ENCODE measurements at regions of chr1 and their contacts with region 1.

Region 1: DNA sequence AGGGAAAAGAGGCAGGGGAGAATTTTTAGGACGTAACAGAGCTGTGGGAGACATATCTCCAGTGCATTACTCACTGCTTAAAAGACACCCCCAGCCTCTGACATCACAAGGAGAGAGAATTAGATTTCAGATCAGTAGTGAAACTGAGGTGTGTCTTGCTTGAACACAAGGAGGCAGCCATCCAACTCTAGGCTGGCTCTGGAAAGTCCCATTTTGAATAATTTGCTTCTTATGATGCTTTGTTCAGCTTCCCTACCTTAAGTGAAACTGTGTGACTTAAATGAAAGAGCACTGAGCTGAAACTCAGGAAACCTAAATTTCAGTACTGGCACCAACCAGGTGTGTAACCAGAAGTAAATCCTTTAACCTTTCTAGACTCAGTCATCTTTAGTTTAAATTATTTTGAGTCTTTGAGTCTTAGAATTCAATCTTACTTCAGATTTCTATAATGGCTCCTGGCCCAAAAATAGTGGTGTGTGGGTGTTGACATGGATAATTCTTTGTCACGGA is 251.6 kb upstream of the SGIP1 start:
- DNase-seq: peak; percentile 94
- ATAC-seq: peak; percentile 91
- H3K4me3 ChIP-seq: peak overlapping the region in 2 of 5 experiments; percentile 10 to 39
- H3K4me3 Mint-ChIP-seq: peak overlapping the region; percentile 80
- H3K27ac ChIP-seq: peak overlapping the region; percentile 86 to 88
- H3K27ac Mint-ChIP-seq: peak overlapping the region; percentile 92
- H3K4me1 ChIP-seq: peaks cover 62 to 67% of the 10 kb centered on the region in 2 donors
- H3K4me1 Mint-ChIP-seq: peaks cover 79% of the 10 kb centered on the region
- H3K27me3 ChIP-seq: no peaks in the 10 kb centered on the region
- H3K27me3 Mint-ChIP-seq: no peaks in the 10 kb centered on the region
- CTCF ChIP-seq: peak; percentile 44

Region 2: DNA sequence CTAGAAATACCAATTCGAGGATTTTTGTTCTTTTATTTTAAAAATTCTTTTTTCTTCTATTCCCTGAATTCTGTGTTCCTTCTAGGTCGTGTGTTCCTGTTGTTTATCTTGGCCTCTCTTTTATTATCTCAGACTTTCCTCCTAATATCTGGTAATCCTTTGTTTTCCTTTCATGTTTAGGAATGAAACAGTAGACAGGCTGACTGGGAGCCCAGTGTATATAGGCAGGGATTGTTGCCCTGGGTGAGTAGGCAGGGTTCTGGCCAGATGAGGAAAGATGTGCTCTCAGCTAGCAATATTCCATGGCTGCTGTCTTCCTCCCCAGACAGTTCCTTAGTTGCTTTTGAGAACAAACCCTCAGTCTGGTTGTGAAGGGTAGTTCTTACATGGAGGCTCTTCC is 651.5 kb before region 1 on chr1:
- CTCF ChIA-PET with region 1: no interaction called
- POLR2A ChIA-PET with region 1: no interaction called
- intact Hi-C with region 1: no loop called
- DNase-seq: no peak
- ATAC-seq: no peak
- H3K4me3 ChIP-seq: no peak overlapping the region
- H3K4me3 Mint-ChIP-seq: no peak overlapping the region
- H3K27ac ChIP-seq: no peak overlapping the region
- H3K27ac Mint-ChIP-seq: no peak overlapping the region
- H3K4me1 ChIP-seq: no peaks in the 10 kb centered on the region
- H3K4me1 Mint-ChIP-seq: no peaks in the 10 kb centered on the region
- H3K27me3 ChIP-seq: no peaks in the 10 kb centered on the region
- H3K27me3 Mint-ChIP-seq: peaks cover 9% of the 10 kb centered on the region
- CTCF ChIP-seq: no peak

Region 3: DNA sequence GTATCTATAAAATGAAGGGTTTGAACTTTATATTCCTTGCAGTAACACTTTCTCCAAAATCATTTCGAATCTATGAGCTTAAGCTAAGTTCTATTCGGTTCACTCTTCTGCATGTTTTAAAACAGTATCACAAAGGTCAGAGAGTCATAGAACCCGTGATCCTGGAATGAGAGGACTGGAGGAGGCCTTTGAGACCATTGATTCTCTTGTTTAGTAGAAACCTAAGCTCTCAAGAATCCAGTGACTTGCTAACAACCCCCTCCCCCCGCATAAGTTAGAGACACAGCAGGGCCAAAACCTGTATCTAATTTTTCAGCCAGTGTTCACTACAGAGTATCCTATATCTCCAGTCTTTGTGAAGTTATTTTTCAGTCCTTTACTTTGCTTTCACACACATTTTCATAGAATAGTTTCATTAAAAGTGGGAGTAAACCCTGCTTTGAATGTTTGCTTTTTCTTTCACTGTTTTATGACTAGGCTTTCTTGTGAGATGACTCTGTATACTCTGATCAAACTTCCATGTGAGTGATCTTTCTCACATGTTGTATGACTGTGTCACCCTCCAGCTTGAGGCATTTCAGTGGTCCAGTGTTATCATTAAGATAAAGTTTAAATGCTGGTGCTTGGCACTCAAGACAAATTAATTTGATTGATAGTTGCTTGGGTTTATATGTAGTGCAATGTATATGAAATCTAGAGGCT is 23.8 kb before region 1 on chr1:
- CTCF ChIA-PET with region 1: interaction called, 11 read pairs
- POLR2A ChIA-PET with region 1: no interaction called
- intact Hi-C with region 1: loop called (anchors 1 kb)
- DNase-seq: no peak
- ATAC-seq: no peak
- H3K4me3 ChIP-seq: no peak overlapping the region
- H3K4me3 Mint-ChIP-seq: no peak overlapping the region
- H3K27ac ChIP-seq: no peak overlapping the region
- H3K27ac Mint-ChIP-seq: no peak overlapping the region
- H3K4me1 ChIP-seq: peaks cover 7 to 13% of the 10 kb centered on the region in 2 donors
- H3K4me1 Mint-ChIP-seq: peaks cover 22% of the 10 kb centered on the region
- H3K27me3 ChIP-seq: no peaks in the 10 kb centered on the region
- H3K27me3 Mint-ChIP-seq: no peaks in the 10 kb centered on the region
- CTCF ChIP-seq: no peak

Region 4: GRCh38 chr1:66271216-66271903 is 11.0 kb before region 1 on chr1:
- CTCF ChIA-PET with region 1: interaction called, 8 read pairs
- POLR2A ChIA-PET with region 1: interaction called, 7 read pairs
- intact Hi-C with region 1: loop called (anchors 1 kb)
- DNase-seq: peak; percentile 48
- ATAC-seq: peak; percentile 90
- H3K4me3 ChIP-seq: no peak overlapping the region
- H3K4me3 Mint-ChIP-seq: peak overlapping the region; percentile 81
- H3K27ac ChIP-seq: no peak overlapping the region
- H3K27ac Mint-ChIP-seq: peak overlapping the region; percentile 93
- H3K4me1 ChIP-seq: peaks cover 14 to 21% of the 10 kb centered on the region in 2 donors
- H3K4me1 Mint-ChIP-seq: peaks cover 36% of the 10 kb centered on the region
- H3K27me3 ChIP-seq: no peaks in the 10 kb centered on the region
- H3K27me3 Mint-ChIP-seq: no peaks in the 10 kb centered on the region
- CTCF ChIP-seq: no peak

Region 5: DNA sequence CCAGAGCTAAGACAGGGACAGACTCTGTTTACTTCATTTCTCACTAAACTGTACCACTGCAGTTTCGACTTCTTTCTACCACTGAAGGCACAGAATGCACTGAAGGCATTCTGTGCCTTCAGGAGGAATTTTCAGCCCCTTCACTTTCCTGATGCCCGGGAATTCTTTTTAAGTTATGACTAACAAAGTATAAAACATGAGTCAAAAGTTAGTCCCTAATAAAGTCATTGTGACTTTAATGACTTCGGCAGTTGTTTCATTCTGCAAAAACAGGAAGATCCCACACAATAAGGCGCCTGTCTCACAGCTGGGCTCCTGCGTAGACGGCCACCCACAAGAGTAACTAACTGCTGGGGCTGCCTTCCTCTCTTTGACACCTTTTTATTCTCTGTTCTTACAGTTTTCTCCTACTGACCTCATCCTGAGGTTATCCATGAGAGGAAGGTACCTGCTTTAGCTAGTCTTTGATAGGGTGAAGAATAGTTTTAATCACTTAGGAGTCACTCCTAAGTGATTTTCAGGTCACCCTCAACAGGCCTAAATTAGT is 67.7 kb after region 1 on chr1:
- CTCF ChIA-PET with region 1: interaction called, 11 read pairs
- POLR2A ChIA-PET with region 1: no interaction called
- intact Hi-C with region 1: no loop called
- DNase-seq: peak; percentile 82
- ATAC-seq: peak; percentile 78
- H3K4me3 ChIP-seq: peak overlapping the region in 2 of 5 experiments; percentile 4 to 31
- H3K4me3 Mint-ChIP-seq: peak overlapping the region; percentile 88
- H3K27ac ChIP-seq: peak overlapping the region; percentile 74 to 87
- H3K27ac Mint-ChIP-seq: peak overlapping the region; percentile 84
- H3K4me1 ChIP-seq: peaks cover 74 to 94% of the 10 kb centered on the region in 2 donors
- H3K4me1 Mint-ChIP-seq: peaks cover 95% of the 10 kb centered on the region
- H3K27me3 ChIP-seq: no peaks in the 10 kb centered on the region
- H3K27me3 Mint-ChIP-seq: no peaks in the 10 kb centered on the region
- CTCF ChIP-seq: no peak

Region 6: DNA sequence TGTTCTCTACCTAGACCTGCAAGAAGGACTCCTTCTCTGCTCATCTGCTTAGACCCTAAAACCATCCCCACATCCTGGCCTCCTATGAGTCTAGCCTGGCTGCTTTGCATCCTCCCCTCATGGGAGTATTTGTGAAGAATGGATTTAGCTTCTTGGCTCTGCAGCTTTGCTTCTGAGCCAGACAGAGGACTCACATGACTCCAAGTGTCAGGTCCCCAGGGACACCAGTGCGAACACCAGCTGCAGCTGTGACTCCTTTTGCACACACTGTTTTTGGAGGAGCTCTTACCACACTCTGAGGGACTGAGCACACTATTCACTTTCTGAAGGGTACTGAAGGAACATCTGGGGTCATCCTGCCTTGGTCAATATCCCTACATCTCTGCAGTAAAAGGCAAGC is 119.8 kb after region 1 on chr1:
- CTCF ChIA-PET with region 1: interaction called, 5 read pairs
- POLR2A ChIA-PET with region 1: interaction called, 4 read pairs
- intact Hi-C with region 1: loop called (anchors 1 kb)
- DNase-seq: peak; percentile 92
- ATAC-seq: peak; percentile 87
- H3K4me3 ChIP-seq: no peak overlapping the region
- H3K4me3 Mint-ChIP-seq: peak overlapping the region; percentile 77
- H3K27ac ChIP-seq: peak overlapping the region; percentile 37 to 76
- H3K27ac Mint-ChIP-seq: peak overlapping the region; percentile 88
- H3K4me1 ChIP-seq: peaks cover 42 to 45% of the 10 kb centered on the region in 2 donors
- H3K4me1 Mint-ChIP-seq: peaks cover 67% of the 10 kb centered on the region
- H3K27me3 ChIP-seq: no peaks in the 10 kb centered on the region
- H3K27me3 Mint-ChIP-seq: no peaks in the 10 kb centered on the region
- CTCF ChIP-seq: no peak

Measured in B cell (primary cell).